ENCODE measurements at regions of chr10 and their contacts with region 1.

Region 1: GRCh38 chr10:102917962-102918816 is at the start of gene CNNM2:
- DNase-seq: peak; percentile 100
- H3K4me3 ChIP-seq: peak within 1 kb of the TSS; percentile 69 to 92 (median 90)
- H3K4me3 Mint-ChIP-seq: peak within 1 kb of the TSS; percentile 90 to 93
- H3K27ac ChIP-seq: peak within 1 kb of the TSS; percentile 66 to 91
- H3K27ac Mint-ChIP-seq: peak within 1 kb of the TSS; percentile 88 to 95 (median 93)
- H3K4me1 ChIP-seq: peaks cover 21 to 36% of the 10 kb centered on the region in 2 donors
- H3K4me1 Mint-ChIP-seq: peaks cover 35% of the 10 kb centered on the region
- H3K27me3 ChIP-seq: peaks cover 3 to 15% of the 10 kb centered on the region in 2 donors
- H3K27me3 Mint-ChIP-seq: peaks cover 17 to 45% (median 26%) of the 10 kb centered on the region in 3 donors
- CTCF ChIP-seq: no peak
- polyA plus RNA-seq, gene CNNM2: 1.6 to 3.8 (median 2.2) TPM

Region 2: GRCh38 chr10:102743588-102744373 is 174.4 kb before region 1 on chr10 and contains the start of gene WBP1L:
- intact Hi-C with region 1: loop called (anchors 5 kb)
- DNase-seq: peak; percentile 97 to 99 (median 98)
- H3K4me3 ChIP-seq: peak within 1 kb of the TSS; percentile 92 to 94 (median 93)
- H3K4me3 Mint-ChIP-seq: peak within 1 kb of the TSS; percentile 98 to 99
- H3K27ac ChIP-seq: peak within 1 kb of the TSS; percentile 56 to 91
- H3K27ac Mint-ChIP-seq: peak within 1 kb of the TSS; percentile 84 to 98 (median 94)
- H3K4me1 ChIP-seq: peaks cover 30 to 32% of the 10 kb centered on the region in 2 donors
- H3K4me1 Mint-ChIP-seq: peaks cover 37% of the 10 kb centered on the region
- H3K27me3 ChIP-seq: no peaks in the 10 kb centered on the region
- H3K27me3 Mint-ChIP-seq: peaks cover 0 to 9% (median 0%) of the 10 kb centered on the region in 3 donors
- CTCF ChIP-seq: no peak
- polyA plus RNA-seq, gene WBP1L: 24.8 to 43.0 (median 38.3) TPM

Region 3: GRCh38 chr10:103069453-103070331 is 151.5 kb after region 1 on chr10:
- intact Hi-C with region 1: loop called (anchors 2 to 10 kb)
- DNase-seq: peak; percentile 15 to 38 (median 27)
- H3K4me3 ChIP-seq: no peak overlapping the region
- H3K4me3 Mint-ChIP-seq: no peak overlapping the region
- H3K27ac ChIP-seq: no peak overlapping the region
- H3K27ac Mint-ChIP-seq: peak overlapping the region in 6 of 7 donors; percentile 31 to 67 (median 49)
- H3K4me1 ChIP-seq: peaks cover 20% of the 10 kb centered on the region in 2 donors
- H3K4me1 Mint-ChIP-seq: peaks cover 22% of the 10 kb centered on the region
- H3K27me3 ChIP-seq: no peaks in the 10 kb centered on the region
- H3K27me3 Mint-ChIP-seq: peaks cover 0 to 5% (median 0%) of the 10 kb centered on the region in 3 donors
- CTCF ChIP-seq: peak; percentile 67

Region 4: GRCh38 chr10:103181244-103181643 is 263.1 kb after region 1 on chr10:
- intact Hi-C with region 1: loop called in 1 of 2 experiments (anchors 5 kb)
- DNase-seq: peak; percentile 44 to 58 (median 48)
- H3K4me3 ChIP-seq: peak overlapping the region in 1 of 3 experiments; percentile 1
- H3K4me3 Mint-ChIP-seq: peak overlapping the region; percentile 61 to 74
- H3K27ac ChIP-seq: peak overlapping the region; percentile 66 to 71
- H3K27ac Mint-ChIP-seq: peak overlapping the region; percentile 72 to 92 (median 88)
- H3K4me1 ChIP-seq: peaks cover 44 to 60% of the 10 kb centered on the region in 2 donors
- H3K4me1 Mint-ChIP-seq: peaks cover 71% of the 10 kb centered on the region
- H3K27me3 ChIP-seq: no peaks in the 10 kb centered on the region
- H3K27me3 Mint-ChIP-seq: peaks cover 0 to 1% (median 0%) of the 10 kb centered on the region in 3 donors
- CTCF ChIP-seq: no peak

Region 5: DNA sequence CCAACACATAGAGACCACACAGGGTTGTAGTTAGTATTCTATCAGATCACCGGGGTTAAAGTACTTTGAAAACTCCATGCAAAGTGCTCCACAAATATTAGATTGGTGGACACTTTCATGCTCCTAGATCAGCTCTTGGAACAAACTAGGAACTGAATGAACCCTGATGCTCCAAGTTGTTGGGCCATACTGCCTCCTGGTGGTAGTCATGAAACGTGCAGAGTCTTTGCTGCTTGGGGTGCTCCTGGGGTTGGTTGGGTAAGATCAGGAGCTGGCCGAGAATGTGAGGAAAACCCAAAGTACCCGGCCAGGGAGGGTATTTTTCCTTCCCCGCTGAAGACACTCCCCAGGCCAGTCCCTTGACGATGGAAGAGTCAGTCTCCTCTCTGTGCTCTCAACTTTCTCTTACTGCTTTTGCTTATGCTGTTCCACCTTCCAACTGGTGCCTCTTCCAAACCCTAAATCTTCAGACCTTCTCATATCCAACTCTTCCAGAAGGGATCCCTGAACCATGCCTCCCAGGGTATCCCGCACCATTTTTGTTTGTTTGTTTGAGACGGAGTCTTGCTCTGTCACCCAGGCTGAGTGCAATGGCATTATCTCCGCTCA is 326.6 kb after region 1 on chr10:
- intact Hi-C with region 1: loop called (anchors 2 kb)
- DNase-seq: peak; percentile 72 to 83 (median 78)
- H3K4me3 ChIP-seq: no peak overlapping the region
- H3K4me3 Mint-ChIP-seq: no peak overlapping the region
- H3K27ac ChIP-seq: no peak overlapping the region
- H3K27ac Mint-ChIP-seq: no peak overlapping the region
- H3K4me1 ChIP-seq: peaks cover 29% of the 10 kb centered on the region in 2 donors
- H3K4me1 Mint-ChIP-seq: peaks cover 36% of the 10 kb centered on the region
- H3K27me3 ChIP-seq: no peaks in the 10 kb centered on the region
- H3K27me3 Mint-ChIP-seq: peaks cover 0 to 2% (median 2%) of the 10 kb centered on the region in 3 donors
- CTCF ChIP-seq: peak; percentile 89

Region 6: DNA sequence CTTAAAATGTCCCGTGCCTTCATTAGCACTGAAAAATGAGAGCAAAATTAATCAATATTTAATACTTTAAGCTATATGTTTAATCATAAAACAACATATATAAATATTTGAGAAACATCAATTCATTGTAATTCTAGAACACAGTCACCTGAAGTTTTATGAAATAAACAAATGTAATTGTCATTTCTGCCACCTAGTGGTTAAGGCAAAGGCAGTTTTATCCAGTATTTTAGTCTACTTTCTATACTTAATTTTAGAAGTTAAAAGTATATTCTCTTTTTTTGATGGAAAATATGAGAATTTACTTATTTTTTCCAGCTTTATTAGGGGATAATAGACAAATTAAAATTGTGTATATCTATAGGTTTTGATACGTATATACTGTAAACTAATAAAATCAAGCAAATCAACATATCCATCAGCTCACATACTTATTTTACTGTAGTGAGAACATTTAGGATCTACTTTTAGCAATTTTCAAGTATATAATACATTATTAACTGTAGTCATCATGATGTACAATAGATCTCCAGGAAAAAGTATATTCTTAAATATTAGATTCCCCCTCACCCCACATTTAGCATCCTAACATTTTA is 415.8 kb after region 1 on chr10:
- intact Hi-C with region 1: loop called (anchors 5 to 10 kb)
- DNase-seq: peak; percentile 1 to 42 (median 8)
- H3K4me3 ChIP-seq: no peak overlapping the region
- H3K4me3 Mint-ChIP-seq: no peak overlapping the region
- H3K27ac ChIP-seq: no peak overlapping the region
- H3K27ac Mint-ChIP-seq: no peak overlapping the region
- H3K4me1 ChIP-seq: no peaks in the 10 kb centered on the region
- H3K4me1 Mint-ChIP-seq: peaks cover 8% of the 10 kb centered on the region
- H3K27me3 ChIP-seq: no peaks in the 10 kb centered on the region
- H3K27me3 Mint-ChIP-seq: no peaks in the 10 kb centered on the region
- CTCF ChIP-seq: peak; percentile 72

Region 7: GRCh38 chr10:103481974-103482531 is 563.9 kb after region 1 on chr10:
- intact Hi-C with region 1: loop called in 1 of 2 experiments (anchors 10 kb)
- DNase-seq: peak; percentile 65 to 82 (median 76)
- H3K4me3 ChIP-seq: no peak overlapping the region
- H3K4me3 Mint-ChIP-seq: no peak overlapping the region
- H3K27ac ChIP-seq: no peak overlapping the region
- H3K27ac Mint-ChIP-seq: no peak overlapping the region
- H3K4me1 ChIP-seq: peaks cover 6 to 11% of the 10 kb centered on the region in 2 donors
- H3K4me1 Mint-ChIP-seq: peaks cover 11% of the 10 kb centered on the region
- H3K27me3 ChIP-seq: no peaks in the 10 kb centered on the region
- H3K27me3 Mint-ChIP-seq: peaks cover 0 to 3% (median 2%) of the 10 kb centered on the region in 3 donors
- CTCF ChIP-seq: peak; percentile 81